ENCODE measurements at regions of chr1 and their contacts with region 1.

Region 1: GRCh38 chr1:28581536-28582247 is 10.4 kb upstream of the RAB42 start:
- DNase-seq: peak; percentile 91 to 94 (median 93)
- H3K4me3 ChIP-seq: peak overlapping the region; percentile 82 to 99
- H3K4me3 Mint-ChIP-seq: peak overlapping the region; percentile 94 to 99 (median 98)
- H3K27ac ChIP-seq: peak overlapping the region; percentile 82
- H3K27ac Mint-ChIP-seq: peak overlapping the region; percentile 92 to 98 (median 95)
- H3K4me1 ChIP-seq: peaks cover 33% of the 10 kb centered on the region
- H3K4me1 Mint-ChIP-seq: peaks cover 21 to 54% (median 38%) of the 10 kb centered on the region in 4 donors
- H3K27me3 ChIP-seq: no peaks in the 10 kb centered on the region
- H3K27me3 Mint-ChIP-seq: no peaks in the 10 kb centered on the region

Region 2: GRCh38 chr1:28235755-28236655 is 345.7 kb before region 1 on chr1 and contains the start of gene ATP5IF1:
- CTCF ChIA-PET with region 1: no interaction called
- POLR2A ChIA-PET with region 1: interaction called, 28 read pairs
- intact Hi-C with region 1: no loop called
- DNase-seq: peak; percentile 92 to 97 (median 95)
- H3K4me3 ChIP-seq: peak within 1 kb of the TSS; percentile 82 to 97
- H3K4me3 Mint-ChIP-seq: peak within 1 kb of the TSS in 2 of 8 donors; percentile 35 to 57
- H3K27ac ChIP-seq: peak within 1 kb of the TSS; percentile 86
- H3K27ac Mint-ChIP-seq: peak within 1 kb of the TSS in 1 of 7 donors; percentile 18
- H3K4me1 ChIP-seq: peaks cover 56% of the 10 kb centered on the region
- H3K4me1 Mint-ChIP-seq: peaks cover 8 to 30% (median 13%) of the 10 kb centered on the region in 4 donors
- H3K27me3 ChIP-seq: no peaks in the 10 kb centered on the region
- H3K27me3 Mint-ChIP-seq: no peaks in the 10 kb centered on the region
- total RNA-seq, gene ATP5IF1: 111 TPM

Region 3: GRCh38 chr1:28282426-28283407 is 299.0 kb before region 1 on chr1:
- CTCF ChIA-PET with region 1: no interaction called
- POLR2A ChIA-PET with region 1: no interaction called
- intact Hi-C with region 1: no loop called
- DNase-seq: no peak
- H3K4me3 ChIP-seq: no peak overlapping the region
- H3K4me3 Mint-ChIP-seq: no peak overlapping the region
- H3K27ac ChIP-seq: no peak overlapping the region
- H3K27ac Mint-ChIP-seq: peak overlapping the region in 1 of 7 donors; percentile 67
- H3K4me1 ChIP-seq: no peaks in the 10 kb centered on the region
- H3K4me1 Mint-ChIP-seq: peaks cover 0 to 7% (median 6%) of the 10 kb centered on the region in 4 donors
- H3K27me3 ChIP-seq: no peaks in the 10 kb centered on the region
- H3K27me3 Mint-ChIP-seq: no peaks in the 10 kb centered on the region

Region 4: DNA sequence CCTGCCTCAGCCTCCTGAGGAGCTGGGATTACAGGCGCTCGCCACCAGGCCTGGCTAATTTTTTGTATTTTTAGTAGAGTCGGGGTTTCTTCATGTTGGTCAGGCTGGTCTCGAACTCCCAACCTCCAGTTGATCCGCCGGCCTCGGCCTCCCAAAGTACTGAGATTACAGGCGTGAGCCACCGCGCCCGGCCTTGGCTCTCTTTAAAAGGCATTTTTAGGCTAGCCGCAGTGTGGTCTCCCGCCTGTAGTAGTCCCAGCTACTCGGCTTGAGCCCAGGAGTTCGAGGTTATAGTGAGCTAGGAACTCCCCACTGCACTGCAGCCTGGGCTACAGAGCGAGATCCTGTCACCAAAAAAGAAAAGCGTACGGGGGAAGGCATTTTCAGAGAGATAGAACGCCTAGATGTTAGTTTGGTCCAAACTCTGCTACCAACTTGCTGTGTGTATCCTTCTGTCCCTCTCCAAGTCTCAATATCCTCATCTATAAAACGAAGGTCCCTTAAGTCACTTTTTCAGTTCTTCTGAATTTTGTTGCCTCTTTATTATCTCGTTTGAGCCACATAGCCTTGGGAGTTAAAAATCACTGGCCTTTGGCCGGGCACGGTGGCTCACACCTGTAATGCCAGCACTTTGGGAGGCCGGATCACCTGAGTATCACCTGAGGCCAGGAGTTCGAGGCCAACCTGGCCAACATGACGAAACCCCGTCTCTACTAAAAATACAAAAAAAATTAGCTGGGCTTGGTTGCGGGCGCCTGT is 252.1 kb before region 1 on chr1:
- CTCF ChIA-PET with region 1: interaction called, 5 read pairs
- POLR2A ChIA-PET with region 1: interaction called, 24 read pairs
- intact Hi-C with region 1: no loop called
- DNase-seq: no peak
- H3K4me3 ChIP-seq: peak overlapping the region; percentile 51 to 53
- H3K4me3 Mint-ChIP-seq: peak overlapping the region; percentile 94 to 96 (median 95)
- H3K27ac ChIP-seq: peak overlapping the region; percentile 84
- H3K27ac Mint-ChIP-seq: peak overlapping the region; percentile 97 to 100 (median 99)
- H3K4me1 ChIP-seq: peaks cover 29% of the 10 kb centered on the region
- H3K4me1 Mint-ChIP-seq: peaks cover 19 to 39% (median 26%) of the 10 kb centered on the region in 4 donors
- H3K27me3 ChIP-seq: no peaks in the 10 kb centered on the region
- H3K27me3 Mint-ChIP-seq: peaks cover 0 to 2% of the 10 kb centered on the region in 2 donors

Region 5: GRCh38 chr1:28552758-28553663 is 28.7 kb before region 1 on chr1 and contains the start of gene TRNAU1AP:
- CTCF ChIA-PET with region 1: interaction called, 23 read pairs
- POLR2A ChIA-PET with region 1: interaction called, 199 read pairs
- intact Hi-C with region 1: loop called (anchors 1 kb)
- DNase-seq: peak; percentile 96 to 98 (median 97)
- H3K4me3 ChIP-seq: peak within 1 kb of the TSS; percentile 89 to 96
- H3K4me3 Mint-ChIP-seq: peak within 1 kb of the TSS; percentile 98 to 100 (median 99)
- H3K27ac ChIP-seq: peak within 1 kb of the TSS; percentile 80
- H3K27ac Mint-ChIP-seq: peak within 1 kb of the TSS; percentile 96 to 99 (median 98)
- H3K4me1 ChIP-seq: peaks cover 21% of the 10 kb centered on the region
- H3K4me1 Mint-ChIP-seq: peaks cover 11 to 35% (median 19%) of the 10 kb centered on the region in 4 donors
- H3K27me3 ChIP-seq: no peaks in the 10 kb centered on the region
- H3K27me3 Mint-ChIP-seq: no peaks in the 10 kb centered on the region
- total RNA-seq, gene TRNAU1AP: 46.3 to 46.7 TPM

Region 6: DNA sequence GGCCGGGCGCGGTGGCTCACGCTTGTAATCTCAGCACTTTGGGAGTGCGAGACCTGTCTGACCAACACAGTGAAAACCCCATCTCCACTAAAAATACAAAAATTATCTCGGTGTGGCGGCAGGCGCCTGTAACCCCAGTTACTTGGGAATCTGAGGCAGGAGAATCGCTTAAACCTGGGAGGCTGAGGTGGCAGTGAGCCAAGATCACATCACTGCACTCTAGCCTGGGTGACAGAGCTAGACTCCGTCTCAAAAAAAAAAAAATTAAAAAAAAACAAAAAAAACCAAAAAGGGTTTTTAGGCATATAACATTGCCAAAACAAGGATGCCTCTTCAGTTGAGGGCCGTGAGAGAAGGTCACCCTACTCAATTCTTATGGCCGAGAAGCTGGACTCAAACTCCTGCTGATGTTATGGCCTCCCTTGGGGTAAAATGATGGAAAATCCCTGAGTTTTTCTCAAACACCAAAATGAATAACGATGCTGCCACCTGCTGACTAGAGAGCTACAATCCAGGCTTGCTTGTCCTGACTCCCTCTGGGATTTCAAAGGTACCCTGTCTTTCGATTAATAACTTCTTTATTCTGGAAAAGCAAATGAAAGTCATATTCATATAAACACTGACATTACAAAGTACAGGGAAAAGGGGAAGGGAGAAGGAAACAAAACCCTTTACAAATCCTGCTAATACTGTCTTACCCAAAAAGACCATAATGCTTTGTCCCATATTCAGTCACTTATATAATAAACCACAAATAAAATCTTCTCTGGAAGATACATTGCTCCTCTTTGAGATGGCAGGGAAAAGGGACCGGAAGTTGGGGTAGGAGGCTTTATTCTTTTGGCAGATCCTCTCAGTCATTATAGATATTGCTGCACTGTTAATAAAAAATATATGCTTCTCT is 21.1 kb after region 1 on chr1:
- CTCF ChIA-PET with region 1: interaction called, 4 read pairs
- POLR2A ChIA-PET with region 1: interaction called, 31 read pairs
- intact Hi-C with region 1: no loop called
- DNase-seq: peak in 3 of 5 donors; percentile 13 to 28 (median 25)
- H3K4me3 ChIP-seq: no peak overlapping the region
- H3K4me3 Mint-ChIP-seq: no peak overlapping the region
- H3K27ac ChIP-seq: no peak overlapping the region
- H3K27ac Mint-ChIP-seq: peak overlapping the region in 2 of 7 donors; percentile 10 to 77
- H3K4me1 ChIP-seq: no peaks in the 10 kb centered on the region
- H3K4me1 Mint-ChIP-seq: peaks cover 0 to 2% (median 0%) of the 10 kb centered on the region in 4 donors
- H3K27me3 ChIP-seq: no peaks in the 10 kb centered on the region
- H3K27me3 Mint-ChIP-seq: no peaks in the 10 kb centered on the region

Region 7: DNA sequence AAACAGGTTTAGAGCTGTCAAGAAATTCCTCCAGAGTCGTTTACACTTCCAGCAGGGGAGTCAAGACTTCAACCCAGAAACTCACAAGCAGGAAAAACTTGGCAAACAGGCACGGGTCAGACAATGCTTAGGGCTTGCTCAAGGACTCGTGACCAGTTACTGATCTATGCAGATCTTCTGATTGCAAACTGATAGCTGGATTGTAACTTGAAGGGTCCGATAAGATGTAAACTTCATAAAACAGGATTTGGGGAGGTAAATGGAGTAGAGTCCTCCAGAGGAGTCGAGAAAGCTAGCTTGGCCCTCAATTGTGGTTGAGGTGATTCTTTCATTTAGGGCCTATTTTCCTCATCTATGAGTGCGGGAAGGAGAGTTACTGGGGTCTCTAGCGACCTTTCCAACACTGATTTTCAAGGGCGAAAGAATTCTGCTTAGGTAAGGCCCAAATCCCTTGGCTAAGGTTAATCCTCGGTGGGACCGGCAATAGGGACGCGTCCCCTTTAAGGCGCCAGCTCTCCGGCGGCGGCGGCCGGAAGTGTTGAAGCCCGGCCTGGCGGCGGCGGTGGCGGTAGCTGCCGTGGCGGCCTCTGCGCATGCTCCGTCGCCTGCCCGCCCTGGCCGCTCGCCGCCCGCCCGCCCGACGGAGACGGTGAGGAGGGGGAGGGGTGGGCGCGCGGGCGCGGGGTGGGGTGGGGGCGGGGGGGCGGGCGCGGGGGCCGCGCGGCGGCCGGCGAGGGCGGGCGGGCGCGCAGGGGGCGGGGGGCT is 86.7 kb after region 1 on chr1 and contains the start of gene GMEB1:
- CTCF ChIA-PET with region 1: interaction called, 3 read pairs
- POLR2A ChIA-PET with region 1: interaction called, 46 read pairs
- intact Hi-C with region 1: no loop called
- DNase-seq: peak; percentile 79 to 86 (median 84)
- H3K4me3 ChIP-seq: peak within 1 kb of the TSS; percentile 89 to 92
- H3K4me3 Mint-ChIP-seq: peak within 1 kb of the TSS; percentile 92 to 97 (median 93)
- H3K27ac ChIP-seq: peak within 1 kb of the TSS; percentile 88
- H3K27ac Mint-ChIP-seq: peak within 1 kb of the TSS; percentile 98 to 100 (median 98)
- H3K4me1 ChIP-seq: peaks cover 21% of the 10 kb centered on the region
- H3K4me1 Mint-ChIP-seq: peaks cover 13 to 26% (median 18%) of the 10 kb centered on the region in 4 donors
- H3K27me3 ChIP-seq: no peaks in the 10 kb centered on the region
- H3K27me3 Mint-ChIP-seq: no peaks in the 10 kb centered on the region
- total RNA-seq, gene GMEB1: 21.8 to 21.9 TPM

Region 8: GRCh38 chr1:28877132-28877781 is 295.6 kb after region 1 on chr1:
- CTCF ChIA-PET with region 1: interaction called, 8 read pairs
- POLR2A ChIA-PET with region 1: interaction called, 13 read pairs
- intact Hi-C with region 1: no loop called
- DNase-seq: peak; percentile 68 to 75 (median 71)
- H3K4me3 ChIP-seq: no peak overlapping the region
- H3K4me3 Mint-ChIP-seq: no peak overlapping the region
- H3K27ac ChIP-seq: no peak overlapping the region
- H3K27ac Mint-ChIP-seq: peak overlapping the region in 3 of 7 donors; percentile 32 to 57 (median 42)
- H3K4me1 ChIP-seq: peaks cover 5% of the 10 kb centered on the region
- H3K4me1 Mint-ChIP-seq: peaks cover 6 to 10% (median 7%) of the 10 kb centered on the region in 4 donors
- H3K27me3 ChIP-seq: no peaks in the 10 kb centered on the region
- H3K27me3 Mint-ChIP-seq: peaks cover 1 to 7% of the 10 kb centered on the region in 2 donors